Esophagus squamous epithelium (tissue), 5 donors: ENCODE measurements at regions of chr13 and their contacts with region 1.

Region 1: GRCh38 chr13:99916366-99917103 is 55.0 kb downstream of the ZIC5 start:
- DNase-seq: no peak
- H3K4me3 ChIP-seq: no peak overlapping the region
- H3K27ac ChIP-seq: no peak overlapping the region
- H3K4me1 ChIP-seq: no peaks in the 10 kb centered on the region
- H3K27me3 ChIP-seq: peaks cover 0 to 45% (median 0%) of the 10 kb centered on the region in 4 donors
- CTCF ChIP-seq: peak; percentile 43 to 94 (median 84)
- POLR2A ChIP-seq: no peak

Region 2: GRCh38 chr13:100235311-100235901 is 318.9 kb after region 1 on chr13:
- intact Hi-C with region 1: loop called (anchors 10 kb)
- DNase-seq: no peak
- H3K4me3 ChIP-seq: no peak overlapping the region
- H3K27ac ChIP-seq: no peak overlapping the region
- H3K4me1 ChIP-seq: peaks cover 0 to 27% (median 15%) of the 10 kb centered on the region in 3 donors
- H3K27me3 ChIP-seq: no peaks in the 10 kb centered on the region
- CTCF ChIP-seq: peak; percentile 34 to 69 (median 54)
- POLR2A ChIP-seq: no peak